Aorta (tissue), 5 donors: ENCODE measurements at regions of chr1 and their contacts with region 1.

Region 1: GRCh38 chr1:204806943-204807687 is 63.5 kb upstream of the NFASC start:
- DNase-seq: peak; percentile 84 to 92
- ATAC-seq: peak; percentile 90
- H3K4me3 ChIP-seq: no peak overlapping the region
- H3K27ac ChIP-seq: no peak overlapping the region
- H3K4me1 ChIP-seq: no peaks in the 10 kb centered on the region
- H3K27me3 ChIP-seq: peaks cover 0 to 2% of the 10 kb centered on the region in 2 donors

Region 2: DNA sequence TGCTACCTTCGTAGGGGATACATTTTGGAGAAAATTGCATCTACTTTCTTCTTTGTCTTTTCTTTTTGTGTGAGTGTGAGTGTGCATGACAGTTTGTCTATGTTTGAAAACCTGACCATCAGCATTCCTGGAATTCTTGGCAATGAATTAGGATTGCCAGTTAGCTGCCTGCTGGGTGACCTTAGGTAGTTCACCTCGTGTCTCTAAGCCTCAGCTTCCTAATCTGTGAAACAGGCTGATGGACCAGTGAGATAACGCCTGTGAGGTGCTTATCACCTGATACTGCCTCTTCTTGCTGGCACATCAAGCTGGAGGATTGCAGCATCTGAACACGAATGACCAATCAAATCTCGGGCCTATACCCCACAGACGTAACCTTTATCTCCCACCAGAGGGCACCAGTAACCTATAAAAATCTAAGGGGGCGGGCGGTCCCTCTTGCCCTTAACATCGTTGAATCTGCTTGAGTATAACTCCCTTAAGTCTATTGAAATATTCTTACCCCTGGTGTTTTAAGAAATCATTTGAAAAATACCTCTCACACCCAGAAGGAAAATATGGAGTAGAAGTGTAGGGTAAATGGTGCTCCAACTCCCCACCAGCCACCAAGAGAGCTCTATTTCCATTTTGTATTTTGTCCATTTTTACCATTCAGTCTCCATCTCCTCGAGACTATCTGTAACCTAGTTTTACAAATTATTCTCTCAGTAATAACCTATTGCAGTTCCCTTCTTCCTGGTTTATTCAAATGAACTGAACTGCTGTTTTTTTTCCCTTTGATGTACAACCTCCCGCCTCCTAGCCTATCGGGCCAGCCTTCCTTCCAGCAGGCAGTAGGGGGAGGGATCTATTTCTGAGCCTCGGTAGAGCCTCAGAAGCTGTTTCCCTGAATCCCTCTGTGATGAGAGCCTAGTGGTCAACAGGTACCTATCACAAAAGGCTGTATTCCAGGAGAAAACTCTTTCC is 241.2 kb before region 1 on chr1:
- intact Hi-C with region 1: loop called (anchors 2 to 5 kb)
- DNase-seq: no peak
- ATAC-seq: peak; percentile 76
- H3K4me3 ChIP-seq: no peak overlapping the region
- H3K27ac ChIP-seq: no peak overlapping the region
- H3K4me1 ChIP-seq: no peaks in the 10 kb centered on the region
- H3K27me3 ChIP-seq: no peaks in the 10 kb centered on the region

Region 3: DNA sequence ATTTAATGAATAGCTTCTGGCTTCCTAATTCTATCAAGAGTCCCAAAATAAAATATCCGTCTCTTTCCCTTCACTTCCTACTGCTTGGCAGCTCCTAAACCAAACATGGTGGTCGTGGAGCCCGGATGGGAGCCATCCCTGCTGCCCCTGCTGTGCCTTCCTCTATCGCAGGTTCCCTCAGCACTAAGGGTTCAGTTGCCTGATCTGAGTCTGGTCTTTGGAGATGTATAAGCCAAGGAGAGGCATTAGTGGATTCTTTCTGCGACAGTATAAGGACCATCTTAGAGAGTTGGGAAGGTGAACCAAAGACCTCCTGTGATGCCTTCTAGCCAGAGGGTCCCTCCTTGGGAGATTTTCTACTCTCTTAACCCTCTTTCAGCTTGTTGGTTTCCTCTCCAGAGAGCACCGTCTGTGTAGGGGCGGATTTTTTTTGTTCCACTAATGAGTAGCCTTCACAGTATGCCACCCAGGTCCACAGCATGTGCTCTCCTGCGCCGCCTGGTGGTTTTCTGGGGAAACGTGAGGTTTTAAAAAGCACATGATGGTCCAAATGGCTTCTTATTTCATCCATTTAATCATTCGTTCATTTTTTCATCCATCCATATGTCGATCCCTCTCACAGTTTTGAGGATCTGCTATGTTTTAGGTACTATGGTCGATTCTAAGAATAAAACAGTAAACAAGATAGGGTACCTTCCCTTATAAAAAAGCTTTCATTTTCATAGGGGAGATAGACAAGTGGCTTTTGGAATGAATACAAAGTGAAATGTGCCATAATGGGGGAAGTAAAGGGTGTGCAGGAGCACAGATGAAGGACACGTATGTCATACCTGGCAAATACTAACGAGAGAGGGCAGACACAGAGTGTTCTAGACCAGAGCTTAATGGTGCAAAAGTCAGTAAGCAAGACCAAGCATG is 134.6 kb after region 1 on chr1:
- intact Hi-C with region 1: loop called (anchors 2 to 5 kb)
- DNase-seq: peak; percentile 68 to 88
- ATAC-seq: peak; percentile 59
- H3K4me3 ChIP-seq: no peak overlapping the region
- H3K27ac ChIP-seq: no peak overlapping the region
- H3K4me1 ChIP-seq: no peaks in the 10 kb centered on the region
- H3K27me3 ChIP-seq: no peaks in the 10 kb centered on the region